B cell (primary cell): ENCODE measurements at regions of chr2 and their contacts with region 1.

Region 1: GRCh38 chr2:213151437-213152064 is at the start of gene IKZF2:
- DNase-seq: peak; percentile 94
- ATAC-seq: peak; percentile 77
- H3K4me3 ChIP-seq: peak within 1 kb of the TSS; percentile 69 to 99 (median 80)
- H3K4me3 Mint-ChIP-seq: peak within 1 kb of the TSS; percentile 96
- H3K27ac ChIP-seq: peak within 1 kb of the TSS; percentile 91 to 93
- H3K27ac Mint-ChIP-seq: peak within 1 kb of the TSS; percentile 94
- H3K4me1 ChIP-seq: peaks cover 23 to 32% of the 10 kb centered on the region in 2 donors
- H3K4me1 Mint-ChIP-seq: peaks cover 55% of the 10 kb centered on the region
- H3K27me3 ChIP-seq: no peaks in the 10 kb centered on the region
- H3K27me3 Mint-ChIP-seq: no peaks in the 10 kb centered on the region
- CTCF ChIP-seq: no peak
- total RNA-seq, gene IKZF2: 49.1 and 49.3 TPM in 2 replicates

Region 2: GRCh38 chr2:212686285-212686895 is 465.2 kb before region 1 on chr2:
- CTCF ChIA-PET with region 1: interaction called, 11 read pairs
- POLR2A ChIA-PET with region 1: no interaction called
- intact Hi-C with region 1: loop called (anchors 1 kb)
- DNase-seq: peak; percentile 65
- ATAC-seq: peak; percentile 64
- H3K4me3 ChIP-seq: no peak overlapping the region
- H3K4me3 Mint-ChIP-seq: no peak overlapping the region
- H3K27ac ChIP-seq: no peak overlapping the region
- H3K27ac Mint-ChIP-seq: no peak overlapping the region
- H3K4me1 ChIP-seq: no peaks in the 10 kb centered on the region
- H3K4me1 Mint-ChIP-seq: peaks cover 2% of the 10 kb centered on the region
- H3K27me3 ChIP-seq: no peaks in the 10 kb centered on the region
- H3K27me3 Mint-ChIP-seq: peaks cover under 1% of the 10 kb centered on the region
- CTCF ChIP-seq: peak; percentile 97

Region 3: GRCh38 chr2:212777020-212777491 is 374.5 kb before region 1 on chr2:
- CTCF ChIA-PET with region 1: interaction called, 141 read pairs
- POLR2A ChIA-PET with region 1: no interaction called
- intact Hi-C with region 1: loop called (anchors 1 kb)
- DNase-seq: peak; percentile 52
- ATAC-seq: peak; percentile 54
- H3K4me3 ChIP-seq: no peak overlapping the region
- H3K4me3 Mint-ChIP-seq: no peak overlapping the region
- H3K27ac ChIP-seq: no peak overlapping the region
- H3K27ac Mint-ChIP-seq: no peak overlapping the region
- H3K4me1 ChIP-seq: no peaks in the 10 kb centered on the region
- H3K4me1 Mint-ChIP-seq: no peaks in the 10 kb centered on the region
- H3K27me3 ChIP-seq: no peaks in the 10 kb centered on the region
- H3K27me3 Mint-ChIP-seq: peaks cover 3% of the 10 kb centered on the region
- CTCF ChIP-seq: peak; percentile 84

Region 4: GRCh38 chr2:213002383-213002782 is 149.2 kb before region 1 on chr2:
- CTCF ChIA-PET with region 1: interaction called, 3 read pairs
- POLR2A ChIA-PET with region 1: no interaction called
- intact Hi-C with region 1: loop called (anchors 5 kb)
- DNase-seq: no peak
- ATAC-seq: no peak
- H3K4me3 ChIP-seq: no peak overlapping the region
- H3K4me3 Mint-ChIP-seq: no peak overlapping the region
- H3K27ac ChIP-seq: no peak overlapping the region
- H3K27ac Mint-ChIP-seq: no peak overlapping the region
- H3K4me1 ChIP-seq: peaks cover 7 to 20% of the 10 kb centered on the region in 2 donors
- H3K4me1 Mint-ChIP-seq: peaks cover 23% of the 10 kb centered on the region
- H3K27me3 ChIP-seq: no peaks in the 10 kb centered on the region
- H3K27me3 Mint-ChIP-seq: no peaks in the 10 kb centered on the region
- CTCF ChIP-seq: no peak

Region 5: DNA sequence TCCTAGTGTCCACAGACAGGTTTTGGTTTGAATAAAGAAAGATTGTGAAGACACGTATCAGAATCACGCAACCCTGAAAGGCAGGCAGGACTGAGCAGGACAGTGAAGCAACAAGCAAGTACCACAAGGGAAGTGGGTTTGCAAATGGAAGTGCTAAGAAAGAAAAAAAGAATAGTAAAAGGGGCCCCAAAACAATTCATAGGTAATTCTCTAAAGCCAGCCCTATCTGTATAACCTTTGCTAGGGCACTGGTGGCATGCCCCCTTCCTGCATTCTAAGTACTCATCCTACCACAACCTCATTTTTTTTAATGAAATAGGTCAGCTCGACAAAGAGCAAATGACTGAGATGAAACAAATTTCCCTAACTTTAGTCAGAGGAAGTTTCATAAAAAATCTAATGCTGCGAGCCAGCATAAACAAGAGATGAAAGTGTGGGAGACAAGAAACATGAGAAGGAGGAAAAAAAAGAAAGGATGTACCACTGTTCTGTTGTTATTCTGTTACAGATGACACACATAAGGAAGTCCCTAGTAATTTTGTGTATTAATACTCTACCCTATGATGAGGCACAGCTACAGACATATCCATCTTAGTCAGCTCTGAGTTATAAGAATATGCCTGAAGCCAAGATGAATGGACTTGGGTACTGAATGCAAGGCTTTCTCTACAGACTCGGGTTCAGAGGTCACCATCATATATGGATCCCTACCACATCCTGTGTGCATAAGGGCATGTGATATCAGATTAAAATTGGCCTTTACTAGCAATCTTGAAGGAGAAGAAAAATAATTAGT is 32.3 kb before region 1 on chr2:
- CTCF ChIA-PET with region 1: interaction called, 3 read pairs
- POLR2A ChIA-PET with region 1: interaction called, 11 read pairs
- intact Hi-C with region 1: loop called (anchors 2 kb)
- DNase-seq: peak; percentile 43
- ATAC-seq: peak; percentile 57
- H3K4me3 ChIP-seq: peak overlapping the region in 1 of 5 experiments; percentile 16
- H3K4me3 Mint-ChIP-seq: peak overlapping the region; percentile 71
- H3K27ac ChIP-seq: peak overlapping the region; percentile 37 to 69
- H3K27ac Mint-ChIP-seq: peak overlapping the region; percentile 33
- H3K4me1 ChIP-seq: peaks cover 17 to 21% of the 10 kb centered on the region in 2 donors
- H3K4me1 Mint-ChIP-seq: peaks cover 40% of the 10 kb centered on the region
- H3K27me3 ChIP-seq: no peaks in the 10 kb centered on the region
- H3K27me3 Mint-ChIP-seq: no peaks in the 10 kb centered on the region
- CTCF ChIP-seq: no peak

Region 6: GRCh38 chr2:213166109-213166508 is 14.6 kb after region 1 on chr2:
- CTCF ChIA-PET with region 1: interaction called, 11 read pairs
- POLR2A ChIA-PET with region 1: no interaction called
- intact Hi-C with region 1: no loop called
- DNase-seq: peak; percentile 56
- ATAC-seq: peak; percentile 84
- H3K4me3 ChIP-seq: peak overlapping the region in 2 of 5 experiments; percentile 9 to 30
- H3K4me3 Mint-ChIP-seq: peak overlapping the region; percentile 48
- H3K27ac ChIP-seq: peak overlapping the region; percentile 81 to 94
- H3K27ac Mint-ChIP-seq: peak overlapping the region; percentile 82
- H3K4me1 ChIP-seq: peaks cover 17 to 38% of the 10 kb centered on the region in 2 donors
- H3K4me1 Mint-ChIP-seq: peaks cover 32% of the 10 kb centered on the region
- H3K27me3 ChIP-seq: no peaks in the 10 kb centered on the region
- H3K27me3 Mint-ChIP-seq: no peaks in the 10 kb centered on the region
- CTCF ChIP-seq: no peak

Region 7: DNA sequence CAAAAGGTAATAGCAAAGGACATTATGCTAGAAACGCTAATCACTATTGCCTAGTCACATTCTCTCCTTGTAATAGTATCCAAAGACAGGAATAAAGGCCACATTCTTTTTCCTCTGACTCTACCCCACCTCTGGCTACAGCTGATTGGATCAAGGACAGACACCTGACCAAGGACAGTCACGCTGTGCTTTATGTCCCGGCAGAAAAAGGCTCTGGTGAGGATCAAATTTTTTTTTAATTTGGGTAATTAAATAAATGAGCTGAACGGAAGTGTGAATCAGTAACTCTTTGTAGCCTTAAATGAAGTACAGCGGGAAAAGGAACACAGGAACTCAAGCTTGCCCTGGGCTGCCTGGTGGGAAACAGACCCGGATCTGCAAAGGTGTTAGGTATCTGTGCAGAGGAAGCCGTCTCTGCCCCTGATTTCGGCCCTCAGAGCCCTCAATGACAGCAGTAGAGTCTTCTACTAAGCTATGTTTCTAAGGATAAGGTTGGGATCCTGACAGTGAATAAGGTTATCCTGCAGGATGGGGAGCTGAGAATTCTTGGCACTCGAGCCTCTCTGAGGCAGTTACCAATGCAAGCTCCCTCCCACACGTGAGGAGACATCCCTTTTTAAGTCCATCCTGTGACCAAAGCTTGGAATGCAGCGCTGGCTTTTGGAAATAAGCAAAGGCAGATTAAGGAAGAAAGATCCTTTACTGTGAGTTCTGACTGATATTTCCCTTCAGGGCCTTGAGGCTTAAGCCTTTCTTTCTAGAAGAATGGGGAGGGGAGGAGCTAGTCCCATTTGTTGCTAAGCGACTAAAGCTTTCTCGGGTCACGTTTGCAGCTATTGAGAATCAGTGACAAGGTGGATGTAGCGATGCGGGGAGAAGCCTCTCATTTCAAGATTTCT is 37.7 kb after region 1 on chr2:
- CTCF ChIA-PET with region 1: no interaction called
- POLR2A ChIA-PET with region 1: no interaction called
- intact Hi-C with region 1: no loop called
- DNase-seq: peak; percentile 16
- ATAC-seq: no peak
- H3K4me3 ChIP-seq: no peak overlapping the region
- H3K4me3 Mint-ChIP-seq: no peak overlapping the region
- H3K27ac ChIP-seq: no peak overlapping the region
- H3K27ac Mint-ChIP-seq: no peak overlapping the region
- H3K4me1 ChIP-seq: peaks cover 6 to 7% of the 10 kb centered on the region in 2 donors
- H3K4me1 Mint-ChIP-seq: peaks cover 9% of the 10 kb centered on the region
- H3K27me3 ChIP-seq: no peaks in the 10 kb centered on the region
- H3K27me3 Mint-ChIP-seq: no peaks in the 10 kb centered on the region
- CTCF ChIP-seq: no peak

Region 8: DNA sequence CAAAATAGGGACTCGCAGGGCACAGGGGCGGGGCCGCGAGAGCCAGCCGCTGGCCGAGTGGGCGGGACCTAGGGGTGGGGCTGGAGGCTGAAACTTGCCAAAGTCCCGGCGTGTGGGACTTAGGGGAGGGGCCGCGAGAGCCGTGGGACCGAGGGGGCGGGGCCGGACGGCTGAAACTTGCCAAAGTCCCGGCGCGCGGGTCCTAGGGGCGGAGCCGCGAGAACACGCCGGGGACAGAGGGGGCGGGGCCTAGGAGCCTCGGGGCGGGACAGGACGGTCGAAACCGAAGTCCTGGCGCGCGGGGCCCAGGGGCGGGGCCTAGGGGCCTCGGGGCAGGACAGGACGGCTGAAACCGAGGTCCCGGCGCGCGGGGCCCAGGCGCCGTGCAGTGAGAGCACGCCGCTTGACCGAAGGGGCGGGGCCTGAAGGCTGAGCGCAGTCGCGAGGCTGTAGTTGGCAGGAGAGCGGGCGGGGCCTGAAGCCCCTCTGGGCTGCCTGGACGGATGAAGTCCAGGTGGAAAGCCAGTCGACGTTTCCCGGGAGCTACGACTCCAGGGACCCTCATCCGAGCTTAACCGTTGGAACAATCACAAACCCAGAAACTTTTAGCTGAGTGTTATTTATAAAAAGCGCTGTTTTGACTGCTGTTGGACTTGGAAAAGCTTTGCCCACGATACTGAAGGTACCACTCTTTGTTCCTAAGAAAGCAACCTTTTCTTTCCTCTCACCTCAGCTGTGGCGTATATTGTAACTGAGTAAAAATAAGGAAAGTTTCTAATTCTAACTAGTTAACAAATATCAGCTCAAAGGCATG is 1658.4 kb after region 1 on chr2:
- CTCF ChIA-PET with region 1: no interaction called
- POLR2A ChIA-PET with region 1: no interaction called
- intact Hi-C with region 1: loop called (anchors 2 kb)
- DNase-seq: peak; percentile 99
- ATAC-seq: peak; percentile 88
- H3K4me3 ChIP-seq: peak overlapping the region; percentile 53 to 96 (median 94)
- H3K4me3 Mint-ChIP-seq: peak overlapping the region; percentile 98
- H3K27ac ChIP-seq: peak overlapping the region; percentile 75 to 76
- H3K27ac Mint-ChIP-seq: peak overlapping the region; percentile 98
- H3K4me1 ChIP-seq: peaks cover 13 to 19% of the 10 kb centered on the region in 2 donors
- H3K4me1 Mint-ChIP-seq: peaks cover 40% of the 10 kb centered on the region
- H3K27me3 ChIP-seq: no peaks in the 10 kb centered on the region
- H3K27me3 Mint-ChIP-seq: no peaks in the 10 kb centered on the region
- CTCF ChIP-seq: no peak